ENCODE measurements at regions of chr14 and their contacts with region 1.

Region 1: GRCh38 chr14:94548999-94549985 is 11.9 kb upstream of the SERPINA4 start:
- DNase-seq: peak; percentile 92
- ATAC-seq: peak; percentile 89
- H3K4me3 Mint-ChIP-seq: no peak overlapping the region
- H3K27ac Mint-ChIP-seq: no peak overlapping the region
- H3K4me1 Mint-ChIP-seq: peaks cover 25% of the 10 kb centered on the region
- H3K27me3 Mint-ChIP-seq: no peaks in the 10 kb centered on the region; the same call in 1 of the 2 replicates
- CTCF ChIP-seq: peak; percentile 98

Region 2: DNA sequence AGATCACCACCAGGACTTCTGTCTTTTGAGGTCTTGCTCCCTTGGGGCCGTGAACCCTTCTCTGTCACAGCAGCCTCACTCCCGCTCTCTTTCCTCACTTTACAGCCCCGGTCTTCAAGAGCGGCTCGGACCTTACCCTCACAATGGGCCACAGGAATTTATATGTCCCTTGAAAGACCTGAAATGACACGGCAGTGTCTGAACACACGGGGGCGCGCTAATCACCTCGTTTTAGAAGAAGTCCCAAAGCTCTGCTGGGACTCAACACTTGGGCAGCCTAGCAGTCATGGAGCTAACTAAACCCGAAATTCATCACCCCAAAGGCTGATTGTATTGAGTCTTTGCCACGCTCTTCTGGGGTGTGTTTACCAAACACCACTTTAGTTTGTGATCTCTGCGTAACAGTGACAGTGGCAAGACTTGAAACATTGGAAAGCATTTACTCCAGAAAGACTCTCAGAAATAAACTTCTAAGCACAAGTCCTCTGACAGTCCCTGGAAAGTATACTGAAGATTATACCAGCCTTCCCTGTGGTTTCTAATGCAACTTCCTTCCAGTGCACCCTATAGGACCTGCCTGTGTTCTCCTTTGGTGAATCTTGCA is 125.7 kb before region 1 on chr14:
- CTCF ChIA-PET with region 1: interaction called, 32 read pairs
- POLR2A ChIA-PET with region 1: no interaction called
- DNase-seq: peak; percentile 90
- ATAC-seq: peak; percentile 98
- H3K4me3 Mint-ChIP-seq: no peak overlapping the region
- H3K27ac Mint-ChIP-seq: no peak overlapping the region
- H3K4me1 Mint-ChIP-seq: peaks cover 14% of the 10 kb centered on the region
- H3K27me3 Mint-ChIP-seq: peaks cover 2% of the 10 kb centered on the region; the same call in 1 of the 2 replicates
- CTCF ChIP-seq: peak; percentile 56

Region 3: GRCh38 chr14:94439453-94440057 is 109.7 kb before region 1 on chr14:
- CTCF ChIA-PET with region 1: interaction called, 85 read pairs
- POLR2A ChIA-PET with region 1: no interaction called
- DNase-seq: no peak
- ATAC-seq: peak; percentile 51; the same call in 1 of the 2 replicates
- H3K4me3 Mint-ChIP-seq: no peak overlapping the region
- H3K27ac Mint-ChIP-seq: no peak overlapping the region
- H3K4me1 Mint-ChIP-seq: peaks cover 5% of the 10 kb centered on the region; the same call in 1 of the 2 replicates
- H3K27me3 Mint-ChIP-seq: no peaks in the 10 kb centered on the region
- CTCF ChIP-seq: no peak

Region 4: GRCh38 chr14:94517641-94518257 is 31.5 kb before region 1 on chr14:
- CTCF ChIA-PET with region 1: interaction called, 14 read pairs
- POLR2A ChIA-PET with region 1: no interaction called
- DNase-seq: no peak
- ATAC-seq: peak; percentile 32; the same call in 1 of the 2 replicates
- H3K4me3 Mint-ChIP-seq: no peak overlapping the region
- H3K27ac Mint-ChIP-seq: no peak overlapping the region; the same call in 1 of the 2 replicates
- H3K4me1 Mint-ChIP-seq: peaks cover 19% of the 10 kb centered on the region
- H3K27me3 Mint-ChIP-seq: peaks cover 3% of the 10 kb centered on the region; the same call in 1 of the 2 replicates
- CTCF ChIP-seq: no peak

Region 5: DNA sequence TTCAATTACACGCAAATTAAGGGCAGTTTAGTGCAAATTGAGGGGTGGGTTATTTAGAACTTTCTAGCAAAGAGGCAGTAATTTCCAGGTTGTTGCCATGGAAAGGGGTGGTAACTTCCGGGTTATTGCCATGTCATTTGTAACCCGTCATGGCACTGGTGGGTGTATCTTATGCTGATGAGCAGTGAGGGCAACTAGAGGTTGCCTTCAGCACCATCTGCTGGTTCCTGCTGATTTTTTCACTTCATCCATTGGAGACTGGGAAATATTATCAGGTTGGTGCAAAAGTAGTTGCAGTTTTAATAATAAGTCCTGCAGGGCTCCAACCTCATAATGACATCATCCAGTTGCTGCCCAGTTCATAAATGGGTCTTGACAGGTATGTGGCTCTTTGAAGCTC is 12.5 kb before region 1 on chr14:
- CTCF ChIA-PET with region 1: interaction called, 34 read pairs
- POLR2A ChIA-PET with region 1: no interaction called
- DNase-seq: no peak
- ATAC-seq: peak; percentile 83
- H3K4me3 Mint-ChIP-seq: no peak overlapping the region
- H3K27ac Mint-ChIP-seq: no peak overlapping the region
- H3K4me1 Mint-ChIP-seq: peaks cover 12% of the 10 kb centered on the region
- H3K27me3 Mint-ChIP-seq: no peaks in the 10 kb centered on the region; the same call in 1 of the 2 replicates
- CTCF ChIP-seq: no peak

Region 6: DNA sequence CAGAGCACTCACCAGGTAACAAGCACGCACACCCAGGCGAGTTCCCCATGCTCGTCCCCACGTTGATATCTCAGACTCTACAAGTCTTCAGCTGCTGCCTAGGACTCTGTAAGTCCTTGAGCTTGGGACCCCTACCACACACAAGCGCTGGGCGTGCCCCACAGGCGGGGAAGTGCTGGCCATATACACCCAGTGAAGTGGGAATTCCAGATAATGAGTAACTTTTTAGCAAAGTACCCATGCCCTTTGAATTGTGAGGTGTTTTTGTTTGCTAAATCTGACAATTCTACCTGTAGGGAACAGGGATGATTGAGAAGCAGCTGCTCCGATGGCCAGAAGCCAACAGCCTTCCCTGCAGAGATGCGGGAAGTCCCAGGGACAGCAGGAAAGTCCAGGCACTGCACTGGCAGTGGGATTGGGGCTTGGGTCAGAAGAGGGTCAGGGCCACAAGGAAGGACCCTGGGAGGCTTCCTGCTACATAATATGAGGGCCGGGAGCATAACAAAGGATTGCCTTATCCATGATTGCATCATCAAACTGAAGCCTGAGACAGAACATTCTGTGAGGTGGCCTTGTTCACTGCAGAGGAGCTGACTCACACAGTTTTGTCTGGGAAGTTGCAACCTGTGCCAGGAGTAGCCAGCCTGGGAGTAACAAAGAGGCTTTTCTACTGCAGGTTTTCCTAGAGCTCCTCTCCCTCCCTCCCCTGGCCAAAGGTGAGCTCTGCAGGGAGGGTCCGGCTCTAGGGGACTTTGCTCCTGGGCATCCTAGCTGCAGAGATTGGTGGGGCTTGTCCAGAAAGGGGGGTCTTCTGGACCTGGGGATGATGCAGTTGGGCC is 49.7 kb after region 1 on chr14:
- CTCF ChIA-PET with region 1: interaction called, 12 read pairs
- POLR2A ChIA-PET with region 1: no interaction called
- DNase-seq: no peak
- ATAC-seq: peak; percentile 59
- H3K4me3 Mint-ChIP-seq: no peak overlapping the region
- H3K27ac Mint-ChIP-seq: 0 out of 2 replicates have a peak overlapping the region, but pooled peaks have one; percentile 6
- H3K4me1 Mint-ChIP-seq: peaks cover 18% of the 10 kb centered on the region
- H3K27me3 Mint-ChIP-seq: no peaks in the 10 kb centered on the region; the same call in none of the 2 replicates
- CTCF ChIP-seq: no peak

Region 7: DNA sequence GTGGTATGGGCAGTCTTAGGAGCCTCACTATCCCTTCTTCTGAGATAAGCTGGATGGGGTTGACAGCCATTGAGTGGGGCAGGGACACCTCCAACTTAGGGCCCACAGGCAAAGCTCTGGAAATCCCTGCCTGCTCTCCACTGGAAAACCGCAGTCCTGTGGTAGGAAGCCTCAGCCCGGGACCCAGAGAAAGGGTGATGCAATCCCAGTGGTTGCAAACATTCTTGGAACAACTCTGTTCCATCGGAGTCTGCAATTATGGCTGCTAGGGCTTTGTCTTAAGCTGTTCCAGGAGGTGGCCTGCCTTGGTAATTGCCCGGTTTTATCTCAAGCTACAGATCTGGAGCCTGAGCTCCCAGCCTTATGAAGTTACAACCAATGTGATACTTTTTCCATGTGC is 474.6 kb after region 1 on chr14:
- CTCF ChIA-PET with region 1: no interaction called
- POLR2A ChIA-PET with region 1: no interaction called
- DNase-seq: no peak
- ATAC-seq: no peak
- H3K4me3 Mint-ChIP-seq: no peak overlapping the region
- H3K27ac Mint-ChIP-seq: no peak overlapping the region
- H3K4me1 Mint-ChIP-seq: no peaks in the 10 kb centered on the region
- H3K27me3 Mint-ChIP-seq: no peaks in the 10 kb centered on the region
- CTCF ChIP-seq: no peak

Measured in WTC11 (cell line).